ENCODE measurements at regions of chr18 and their contacts with region 1.

Region 1: GRCh38 chr18:36095936-36096519 is 28.7 kb upstream of the RPRD1A start:
- DNase-seq: peak; percentile 53
- H3K4me3 ChIP-seq: no peak overlapping the region; a peak in 1 of 4 replicates
- H3K27ac ChIP-seq: no peak overlapping the region
- H3K4me1 ChIP-seq: no peaks in the 10 kb centered on the region
- H3K27me3 ChIP-seq: no peaks in the 10 kb centered on the region
- CTCF ChIP-seq: peak; percentile 72
- EP300 ChIP-seq: no peak
- RAD21 ChIP-seq: peak; percentile 89

Region 2: DNA sequence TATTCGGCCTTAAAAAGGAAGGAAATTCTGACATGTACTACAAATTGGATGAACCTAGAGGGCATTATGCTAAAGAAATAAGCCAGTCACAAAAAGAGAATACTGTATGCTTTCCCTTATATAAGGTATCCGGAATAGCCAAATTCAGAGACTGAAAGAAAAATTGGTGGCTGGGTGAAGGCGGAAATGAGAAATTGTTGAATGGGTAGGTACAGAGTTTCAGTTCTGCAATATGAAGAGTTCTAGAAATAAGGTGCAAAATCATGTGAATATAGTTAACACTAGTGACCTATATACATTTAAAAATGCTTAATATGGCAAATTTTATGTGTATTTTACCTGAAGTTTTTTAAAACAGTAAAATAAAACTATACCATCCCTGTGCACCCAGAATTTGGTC is 80.4 kb before region 1 on chr18:
- CTCF ChIA-PET with region 1: interaction called, 23 read pairs
- POLR2A ChIA-PET with region 1: no interaction called
- DNase-seq: no peak
- H3K4me3 ChIP-seq: no peak overlapping the region
- H3K27ac ChIP-seq: no peak overlapping the region
- H3K4me1 ChIP-seq: peaks cover 0 to 11% of the 10 kb centered on the region in 2 experiments; a peak in 2 of 4 replicates
- H3K27me3 ChIP-seq: no peaks in the 10 kb centered on the region
- CTCF ChIP-seq: no peak
- EP300 ChIP-seq: no peak
- RAD21 ChIP-seq: no peak

Region 3: GRCh38 chr18:36025025-36025424 is 71.0 kb before region 1 on chr18:
- CTCF ChIA-PET with region 1: interaction called, 10 read pairs
- POLR2A ChIA-PET with region 1: no interaction called
- DNase-seq: no peak
- H3K4me3 ChIP-seq: no peak overlapping the region
- H3K27ac ChIP-seq: peak overlapping the region; percentile 20 to 81; a peak in 3 of 4 replicates
- H3K4me1 ChIP-seq: peaks cover 0 to 9% of the 10 kb centered on the region in 2 experiments; a peak in 2 of 4 replicates
- H3K27me3 ChIP-seq: no peaks in the 10 kb centered on the region
- CTCF ChIP-seq: no peak
- EP300 ChIP-seq: peak; percentile 18 to 38; a peak in 2 of 4 replicates
- RAD21 ChIP-seq: no peak

Region 4: DNA sequence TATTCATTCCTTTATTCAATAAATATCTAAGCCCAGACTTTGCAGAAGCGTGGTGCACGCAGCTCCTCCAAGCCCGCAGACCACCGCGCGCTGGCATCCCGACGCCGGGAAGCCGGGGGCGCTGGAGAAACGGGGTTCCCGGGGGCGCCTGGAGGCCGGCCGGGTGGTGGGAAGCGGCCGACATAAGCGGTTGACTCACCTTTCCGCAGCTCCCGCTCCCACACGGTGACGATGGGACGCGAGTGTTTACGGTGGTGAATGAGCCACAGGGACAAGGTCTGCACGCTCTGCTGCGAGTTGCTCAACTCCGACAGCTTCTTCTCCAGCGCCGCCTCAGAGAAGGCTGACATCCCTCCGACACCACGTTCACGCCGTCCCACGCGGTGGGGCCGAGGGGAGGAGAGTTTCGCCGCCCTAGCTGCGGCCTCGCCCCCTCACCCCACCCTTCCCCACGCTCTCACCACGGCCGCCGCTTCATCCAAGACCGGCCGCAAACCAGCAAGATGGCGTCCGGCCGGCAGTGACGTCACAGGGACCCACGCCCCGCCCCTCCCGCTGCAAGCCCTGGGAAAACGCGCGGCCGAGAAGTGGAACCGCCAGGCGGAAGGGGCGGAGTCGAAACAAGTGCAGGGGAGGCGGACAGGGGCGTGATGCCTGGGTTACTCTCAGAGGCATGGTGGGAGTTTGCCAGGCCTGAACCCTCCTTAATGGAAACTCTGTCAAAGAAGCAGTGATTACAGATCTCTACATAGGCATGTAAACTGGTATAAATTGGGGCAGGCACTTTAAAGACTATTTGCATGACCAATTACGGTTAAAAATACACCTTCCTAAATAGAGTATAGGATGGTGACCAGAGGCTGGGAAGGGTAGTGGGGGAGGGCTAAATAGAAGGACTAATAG is 28.7 kb before region 1 on chr18 and contains the start of gene RPRD1A:
- CTCF ChIA-PET with region 1: interaction called, 10 read pairs
- POLR2A ChIA-PET with region 1: interaction called, 3 read pairs
- DNase-seq: peak; percentile 99
- H3K4me3 ChIP-seq: peak within 1 kb of the TSS; percentile 80 to 84
- H3K27ac ChIP-seq: peak within 1 kb of the TSS; percentile 89 to 90
- H3K4me1 ChIP-seq: peaks cover 0 to 11% of the 10 kb centered on the region in 2 experiments; a peak in 2 of 4 replicates
- H3K27me3 ChIP-seq: no peaks in the 10 kb centered on the region
- CTCF ChIP-seq: no peak
- EP300 ChIP-seq: no peak
- RAD21 ChIP-seq: no peak
- polyA plus RNA-seq, gene RPRD1A: 28.9 and 44.4 TPM in 2 replicates

Region 5: GRCh38 chr18:36274083-36274715 is 178.2 kb after region 1 on chr18:
- CTCF ChIA-PET with region 1: interaction called, 136 read pairs
- POLR2A ChIA-PET with region 1: no interaction called
- DNase-seq: no peak
- H3K4me3 ChIP-seq: no peak overlapping the region
- H3K27ac ChIP-seq: no peak overlapping the region
- H3K4me1 ChIP-seq: no peaks in the 10 kb centered on the region; a peak in 1 of 4 replicates
- H3K27me3 ChIP-seq: no peaks in the 10 kb centered on the region
- CTCF ChIP-seq: no peak
- EP300 ChIP-seq: no peak
- RAD21 ChIP-seq: no peak

Region 6: DNA sequence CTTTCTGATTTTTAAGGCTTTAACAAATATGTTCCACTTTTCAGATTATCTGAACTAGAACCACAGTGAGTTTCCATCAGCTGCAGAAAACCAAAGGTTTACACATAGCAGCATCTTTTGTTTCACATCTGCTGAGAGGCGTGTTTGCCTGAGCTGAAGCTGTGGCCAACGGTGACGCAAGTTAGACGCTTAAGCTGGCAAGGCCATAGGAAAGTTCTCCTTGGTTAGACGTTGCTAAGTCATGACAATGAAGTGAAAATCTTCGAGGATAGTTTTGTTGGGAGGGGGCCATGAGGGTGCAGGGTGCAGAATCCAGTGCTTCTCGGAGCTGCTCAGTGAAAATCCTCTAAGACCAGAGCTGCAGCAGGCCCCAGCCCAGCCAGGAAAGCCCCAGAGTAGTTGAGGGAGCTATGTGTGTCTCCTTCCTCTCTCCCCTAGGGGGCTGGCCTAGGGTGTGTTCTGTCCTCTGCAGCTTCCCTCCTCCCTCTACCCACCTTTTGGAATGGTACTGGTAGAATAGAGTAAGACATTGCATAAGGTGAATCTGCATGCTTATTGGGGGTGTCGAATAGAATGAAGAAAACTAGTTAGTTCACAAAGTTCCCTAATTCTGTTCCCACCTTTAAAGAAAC is 306.9 kb after region 1 on chr18:
- CTCF ChIA-PET with region 1: no interaction called
- POLR2A ChIA-PET with region 1: no interaction called
- DNase-seq: no peak
- H3K4me3 ChIP-seq: no peak overlapping the region
- H3K27ac ChIP-seq: no peak overlapping the region
- H3K4me1 ChIP-seq: peaks cover 0 to 33% of the 10 kb centered on the region in 2 experiments; a peak in 2 of 4 replicates
- H3K27me3 ChIP-seq: no peaks in the 10 kb centered on the region
- CTCF ChIP-seq: no peak
- EP300 ChIP-seq: no peak
- RAD21 ChIP-seq: no peak